ENCODE measurements at regions of chr10 and their contacts with region 1.

Region 1: DNA sequence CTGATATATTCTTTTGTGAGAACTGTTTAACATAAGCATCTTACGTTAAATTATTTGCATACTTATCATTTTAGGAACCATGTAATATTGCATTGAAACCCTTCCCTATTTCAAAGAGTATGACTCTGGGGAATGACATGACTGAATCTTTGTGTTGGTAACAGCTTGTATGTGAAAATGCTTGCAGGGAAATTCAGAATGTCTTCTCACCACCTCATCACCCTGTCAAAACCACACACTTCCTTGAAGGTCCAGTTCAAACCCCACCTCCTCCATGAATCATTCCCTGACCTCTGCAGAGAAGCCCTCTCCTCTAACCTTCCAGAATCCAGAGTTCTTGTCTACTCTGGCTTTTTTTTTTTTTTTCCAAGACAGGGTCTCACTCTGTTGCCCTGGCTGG is 26.3 kb upstream of the NKX2-3 start:
- DNase-seq: no peak

Region 2: GRCh38 chr10:98376485-98376884 is 1129.9 kb before region 1 on chr10:
- intact Hi-C with region 1: loop called in 1 of 2 experiments (anchors 5 kb)
- DNase-seq: no peak

Measured in posterior vena cava (tissue), 2 donors.